Activated CD4-positive, alpha-beta T cell treated with anti-CD3 and anti-CD28 coated beads for 36 hours (primary cell): ENCODE measurements at regions of chr14 and their contacts with region 1.

Region 1: DNA sequence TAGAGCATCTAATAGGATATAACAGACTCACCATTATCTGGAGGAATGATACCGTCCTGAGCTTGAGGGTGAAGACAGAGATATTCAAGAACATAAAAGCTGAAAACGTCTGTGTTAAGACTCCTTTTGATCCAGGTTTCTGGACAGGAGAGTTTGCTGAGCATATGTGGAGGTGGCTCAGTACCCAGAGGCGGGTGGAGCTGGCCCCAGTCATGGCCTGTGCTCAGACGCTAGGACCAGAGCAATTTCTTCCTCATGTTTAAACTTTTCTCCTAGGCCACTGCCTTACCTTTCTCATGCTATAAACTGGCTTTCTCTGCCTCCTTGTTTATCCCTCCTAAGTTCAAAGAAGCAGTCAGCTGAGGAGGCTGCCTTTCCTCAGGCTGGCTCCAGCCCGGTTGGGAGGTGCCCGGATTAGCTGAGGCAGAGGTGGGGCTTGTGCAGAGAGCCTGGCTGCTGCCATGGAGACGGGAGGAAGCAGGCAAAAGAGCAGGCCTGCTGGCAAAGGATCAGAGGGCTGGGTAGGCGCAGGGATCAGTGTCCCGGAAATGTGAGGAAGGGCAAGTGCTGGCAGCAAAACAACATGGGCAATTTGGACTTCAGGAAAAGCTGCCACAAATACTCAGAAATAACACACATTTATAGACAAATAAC is 13.7 kb downstream of the COA8 start:
- DNase-seq: no peak
- ATAC-seq: no peak
- H3K4me3 Mint-ChIP-seq: no peak overlapping the region
- H3K27ac Mint-ChIP-seq: no peak overlapping the region
- H3K4me1 Mint-ChIP-seq: no peaks in the 10 kb centered on the region
- H3K27me3 Mint-ChIP-seq: no peaks in the 10 kb centered on the region

Region 2: GRCh38 chr14:103292426-103293374 is 283.8 kb before region 1 on chr14:
- CTCF ChIA-PET with region 1: no interaction called
- POLR2A ChIA-PET with region 1: no interaction called
- intact Hi-C with region 1: no loop called
- DNase-seq: peak; percentile 89
- ATAC-seq: peak; percentile 97
- H3K4me3 Mint-ChIP-seq: no peak overlapping the region
- H3K27ac Mint-ChIP-seq: no peak overlapping the region
- H3K4me1 Mint-ChIP-seq: no peaks in the 10 kb centered on the region
- H3K27me3 Mint-ChIP-seq: peaks cover 9% of the 10 kb centered on the region

Region 3: DNA sequence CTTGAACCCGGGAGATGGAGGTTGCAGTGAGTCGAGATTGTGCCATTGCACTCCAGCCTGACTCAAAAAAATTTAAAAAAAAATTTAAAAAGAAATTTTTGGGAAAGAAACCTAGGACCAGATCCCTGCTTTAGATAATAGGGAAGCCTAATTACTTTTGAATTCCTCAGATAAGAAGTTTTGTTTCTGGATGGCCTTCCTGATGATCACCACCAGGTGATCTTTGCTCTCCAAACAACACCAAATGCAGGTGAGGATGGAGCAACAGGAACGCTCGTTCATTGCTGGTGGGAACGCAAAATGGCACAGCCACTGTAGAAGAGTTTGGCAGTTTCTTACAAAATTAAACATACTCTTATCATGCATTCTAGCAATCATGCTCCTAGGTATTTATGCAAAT is 24.0 kb after region 1 on chr14:
- CTCF ChIA-PET with region 1: no interaction called
- POLR2A ChIA-PET with region 1: no interaction called
- intact Hi-C with region 1: no loop called
- DNase-seq: no peak
- ATAC-seq: no peak
- H3K4me3 Mint-ChIP-seq: no peak overlapping the region
- H3K27ac Mint-ChIP-seq: no peak overlapping the region
- H3K4me1 Mint-ChIP-seq: peaks cover 2% of the 10 kb centered on the region
- H3K27me3 Mint-ChIP-seq: no peaks in the 10 kb centered on the region

Region 4: DNA sequence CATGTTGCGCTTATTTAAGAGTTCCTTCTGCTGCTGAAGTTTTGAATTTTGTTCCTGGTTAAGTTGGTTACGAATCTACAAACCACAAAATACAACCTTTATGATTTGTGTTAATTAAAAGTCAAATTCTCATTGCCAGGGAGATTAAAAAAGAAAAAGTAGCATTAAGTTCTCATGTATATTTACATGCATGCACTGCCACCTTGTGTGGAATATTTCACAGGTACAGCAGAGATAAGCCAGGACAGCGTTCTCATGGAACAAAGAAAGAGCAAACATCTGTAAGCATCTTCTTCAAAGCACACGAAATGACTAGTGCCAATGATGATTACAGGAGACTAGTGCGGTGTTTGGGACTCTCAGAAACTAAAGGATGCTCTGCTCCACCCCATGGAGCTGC is 173.4 kb after region 1 on chr14:
- CTCF ChIA-PET with region 1: no interaction called
- POLR2A ChIA-PET with region 1: no interaction called
- intact Hi-C with region 1: loop called in 1 of 2 experiments (anchors 5 kb)
- DNase-seq: no peak
- ATAC-seq: no peak
- H3K4me3 Mint-ChIP-seq: no peak overlapping the region
- H3K27ac Mint-ChIP-seq: no peak overlapping the region
- H3K4me1 Mint-ChIP-seq: peaks cover 16% of the 10 kb centered on the region
- H3K27me3 Mint-ChIP-seq: no peaks in the 10 kb centered on the region